ENCODE measurements at regions of chr10 and their contacts with region 1.

Region 1: GRCh38 chr10:24518981-24519597 is 204.6 kb downstream of the ARHGAP21 start:
- DNase-seq: peak; percentile 69 to 76 (median 71)
- ATAC-seq: peak; percentile 75
- H3K4me3 ChIP-seq: no peak overlapping the region
- H3K27ac ChIP-seq: peak overlapping the region in 2 of 4 donors; percentile 30 to 47
- H3K4me1 ChIP-seq: peaks cover 6% of the 10 kb centered on the region
- H3K27me3 ChIP-seq: no peaks in the 10 kb centered on the region
- CTCF ChIP-seq: peak; percentile 64 to 81 (median 74)
- POLR2A ChIP-seq: no peak

Region 2: DNA sequence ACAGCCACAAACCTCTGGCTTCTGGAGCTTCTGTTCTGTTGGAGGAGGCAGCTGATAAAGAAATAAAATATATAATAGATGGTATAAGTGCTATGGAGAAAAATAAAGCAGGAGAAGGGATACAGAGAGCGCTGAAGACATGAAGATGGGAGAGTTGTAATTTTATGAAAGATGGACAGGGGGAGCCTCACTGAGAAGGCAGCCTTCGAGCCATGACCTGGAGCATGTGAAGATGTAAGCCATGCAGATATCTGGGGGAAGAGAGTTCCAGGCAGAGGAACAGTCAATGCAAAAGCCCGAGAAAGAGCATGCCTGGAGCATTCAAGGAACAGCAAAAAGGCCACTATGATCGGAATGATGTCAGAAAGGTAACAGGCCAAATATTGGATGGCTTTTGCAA is 122.7 kb before region 1 on chr10:
- intact Hi-C with region 1: loop called (anchors 10 kb)
- DNase-seq: no peak
- ATAC-seq: no peak
- H3K4me3 ChIP-seq: no peak overlapping the region
- H3K27ac ChIP-seq: no peak overlapping the region
- H3K4me1 ChIP-seq: no peaks in the 10 kb centered on the region
- H3K27me3 ChIP-seq: no peaks in the 10 kb centered on the region
- CTCF ChIP-seq: no peak
- POLR2A ChIP-seq: no peak

Region 3: DNA sequence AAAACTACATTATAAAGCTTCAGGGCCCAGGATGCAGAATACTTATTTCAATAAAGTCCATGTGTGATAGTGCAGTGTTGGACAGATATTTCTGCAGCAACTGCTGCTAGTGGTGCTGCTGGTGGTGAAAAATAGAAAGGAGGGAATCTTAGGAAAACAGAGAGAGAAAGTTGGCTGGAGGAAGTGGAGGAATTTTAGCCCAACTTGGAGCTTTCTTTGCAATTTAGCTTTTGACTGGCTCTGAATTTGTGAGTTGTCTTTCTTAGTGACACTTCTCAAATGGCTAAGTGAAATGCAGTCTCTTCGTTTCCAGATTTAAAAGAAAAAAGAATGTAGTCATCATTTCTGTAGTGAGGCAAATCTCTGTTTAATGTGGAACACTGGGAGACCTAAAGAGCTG is 701.1 kb after region 1 on chr10:
- intact Hi-C with region 1: no loop called
- DNase-seq: no peak
- ATAC-seq: no peak
- H3K4me3 ChIP-seq: no peak overlapping the region
- H3K27ac ChIP-seq: no peak overlapping the region
- H3K4me1 ChIP-seq: no peaks in the 10 kb centered on the region
- H3K27me3 ChIP-seq: no peaks in the 10 kb centered on the region
- CTCF ChIP-seq: no peak
- POLR2A ChIP-seq: no peak